GM18951 (cell line): ENCODE measurements at regions of chrX and their contacts with region 1.

Region 1: DNA sequence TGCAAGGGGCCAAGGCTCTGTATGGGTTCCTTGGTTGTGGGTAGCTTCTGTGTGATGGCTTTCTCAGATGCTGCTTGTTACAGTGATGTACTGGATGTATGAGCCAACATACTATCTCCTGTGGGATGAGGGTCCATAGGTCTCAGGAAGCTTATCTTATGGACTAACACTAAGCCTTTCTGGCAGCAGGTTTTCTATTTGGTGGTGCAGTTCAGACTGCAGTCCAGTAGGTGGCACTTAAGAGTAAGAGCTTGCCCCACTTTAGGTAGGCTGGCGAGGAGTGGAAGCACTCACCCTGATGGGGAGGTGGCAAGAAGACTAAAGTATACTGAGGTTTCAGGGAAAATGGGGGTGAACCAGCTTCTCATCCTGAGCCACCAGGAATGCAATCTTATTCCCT is 306.7 kb upstream of the MAOA start:
- POLR2A ChIP-seq: no peak

Region 2: DNA sequence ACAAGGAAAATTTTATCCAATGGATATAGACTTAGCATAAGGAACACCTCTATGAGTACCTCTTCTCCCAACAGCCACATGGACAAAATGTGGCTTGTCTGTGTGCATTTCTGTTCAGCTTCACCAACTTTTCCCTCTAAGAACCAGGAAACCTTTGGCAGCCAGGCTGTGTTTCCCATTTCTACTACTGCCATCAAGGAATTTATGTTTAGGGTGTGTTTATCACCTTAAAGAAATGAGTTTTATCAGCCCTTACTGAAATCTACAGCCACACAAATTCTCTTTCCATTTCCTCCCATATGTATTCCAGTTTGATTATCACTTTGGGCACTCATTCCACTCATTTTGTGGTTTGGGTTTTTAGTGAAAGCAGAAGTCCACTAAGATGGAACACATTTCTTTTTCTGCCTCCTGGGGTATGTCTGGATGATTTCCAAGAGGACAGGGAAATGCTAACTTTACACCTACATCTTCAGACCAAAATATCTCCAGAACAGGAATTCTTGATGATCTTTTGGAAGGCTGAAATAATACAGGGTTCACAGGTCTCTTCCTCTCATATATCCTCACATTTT is 224.2 kb after region 1 on chrX:
- in situ Hi-C with region 1: no loop called
- POLR2A ChIP-seq: no peak

Region 3: GRCh38 chrX:43741843-43742573 is 392.6 kb after region 1 on chrX:
- in situ Hi-C with region 1: loop called (anchors 25 kb)
- POLR2A ChIP-seq: no peak